ENCODE measurements at regions of chr21 and their contacts with region 1.

Region 1: DNA sequence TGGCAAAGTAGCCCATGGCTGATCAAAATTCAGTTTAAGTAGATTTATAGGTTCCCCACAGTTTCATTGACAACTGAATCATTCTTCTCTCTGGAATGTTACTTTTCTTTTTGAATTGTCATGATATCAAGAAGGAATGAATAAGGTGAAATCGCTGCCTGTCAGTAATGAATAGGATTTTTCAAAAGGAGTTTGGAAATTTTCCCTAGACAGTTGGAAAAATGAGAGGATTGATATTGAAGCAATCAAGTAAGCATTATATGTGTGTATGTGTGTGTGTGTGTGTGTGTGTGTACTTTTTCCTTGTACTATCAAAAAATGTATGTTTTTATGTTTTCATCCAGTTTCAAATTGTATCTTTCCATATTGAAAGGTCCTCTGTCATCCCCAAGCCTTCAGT is 479.5 kb downstream of the MRPL39 start:
- DNase-seq: no peak
- H3K4me3 ChIP-seq: no peak overlapping the region
- H3K27ac ChIP-seq: no peak overlapping the region
- H3K4me1 ChIP-seq: no peaks in the 10 kb centered on the region
- H3K27me3 ChIP-seq: no peaks in the 10 kb centered on the region
- CTCF ChIP-seq: no peak
- POLR2A ChIP-seq: no peak

Region 2: DNA sequence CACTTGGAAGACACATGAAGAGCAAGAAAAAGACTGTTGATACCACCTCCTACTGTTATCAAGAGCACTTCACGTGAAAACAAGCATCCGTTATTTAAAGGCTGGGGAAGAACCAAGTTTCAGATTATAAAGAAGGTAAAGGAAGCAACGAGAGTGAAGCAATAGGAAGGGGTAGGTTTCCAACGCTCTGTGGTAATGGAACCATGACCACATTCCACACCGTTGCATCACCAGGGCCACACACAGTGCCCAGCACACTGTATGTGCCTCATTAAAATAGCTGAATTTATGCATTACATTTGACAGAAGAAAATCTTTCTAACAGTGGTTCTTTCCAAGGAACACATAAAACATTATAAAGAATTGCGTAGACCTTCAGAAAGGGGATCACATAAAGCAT is 43.6 kb after region 1 on chr21:
- intact Hi-C with region 1: loop called in 1 of 2 experiments (anchors 2 kb)
- DNase-seq: no peak
- H3K4me3 ChIP-seq: no peak overlapping the region
- H3K27ac ChIP-seq: no peak overlapping the region
- H3K4me1 ChIP-seq: no peaks in the 10 kb centered on the region
- H3K27me3 ChIP-seq: no peaks in the 10 kb centered on the region
- CTCF ChIP-seq: no peak
- POLR2A ChIP-seq: no peak